Naive thymus-derived CD4-positive, alpha-beta T cell (primary cell): ENCODE measurements at regions of chr16 and their contacts with region 1.

Region 1: GRCh38 chr16:80804056-80804450 is 345 bp downstream of the CDYL2 start:
- DNase-seq: peak; percentile 26 to 69 (median 52)
- ATAC-seq: peak; percentile 69
- H3K4me3 ChIP-seq: no peak overlapping the region
- H3K4me3 Mint-ChIP-seq: peak overlapping the region; percentile 85 to 96 (median 94)
- H3K27ac ChIP-seq: no peak overlapping the region
- H3K27ac Mint-ChIP-seq: peak overlapping the region in 7 of 9 donors; percentile 46 to 98 (median 78)
- H3K4me1 ChIP-seq: peaks cover 0 to 10% of the 10 kb centered on the region in 2 donors
- H3K4me1 Mint-ChIP-seq: peaks cover 12 to 59% (median 18%) of the 10 kb centered on the region in 7 donors
- H3K27me3 ChIP-seq: no peaks in the 10 kb centered on the region
- H3K27me3 Mint-ChIP-seq: peaks cover 0 to 9% (median 0%) of the 10 kb centered on the region in 5 donors

Region 2: GRCh38 chr16:80540516-80541272 is 263.4 kb before region 1 on chr16 and contains the start of gene DYNLRB2:
- CTCF ChIA-PET with region 1: no interaction called
- POLR2A ChIA-PET with region 1: interaction called, 4 read pairs
- intact Hi-C with region 1: loop called (anchors 1 to 2 kb)
- DNase-seq: peak; percentile 82 to 94 (median 93)
- ATAC-seq: peak; percentile 94
- H3K4me3 ChIP-seq: peak within 1 kb of the TSS; percentile 94
- H3K4me3 Mint-ChIP-seq: peak within 1 kb of the TSS; percentile 93 to 98 (median 96)
- H3K27ac ChIP-seq: peak within 1 kb of the TSS; percentile 77
- H3K27ac Mint-ChIP-seq: peak within 1 kb of the TSS; percentile 96 to 99 (median 97)
- H3K4me1 ChIP-seq: peaks cover 6 to 13% of the 10 kb centered on the region in 2 donors
- H3K4me1 Mint-ChIP-seq: peaks cover 16 to 33% (median 19%) of the 10 kb centered on the region in 7 donors
- H3K27me3 ChIP-seq: no peaks in the 10 kb centered on the region
- H3K27me3 Mint-ChIP-seq: peaks cover 0 to 9% (median 3%) of the 10 kb centered on the region in 5 donors
- total RNA-seq, gene DYNLRB2: 0.92 to 1.2 TPM in 2 of 5 experiments, not detected in the others

Region 3: DNA sequence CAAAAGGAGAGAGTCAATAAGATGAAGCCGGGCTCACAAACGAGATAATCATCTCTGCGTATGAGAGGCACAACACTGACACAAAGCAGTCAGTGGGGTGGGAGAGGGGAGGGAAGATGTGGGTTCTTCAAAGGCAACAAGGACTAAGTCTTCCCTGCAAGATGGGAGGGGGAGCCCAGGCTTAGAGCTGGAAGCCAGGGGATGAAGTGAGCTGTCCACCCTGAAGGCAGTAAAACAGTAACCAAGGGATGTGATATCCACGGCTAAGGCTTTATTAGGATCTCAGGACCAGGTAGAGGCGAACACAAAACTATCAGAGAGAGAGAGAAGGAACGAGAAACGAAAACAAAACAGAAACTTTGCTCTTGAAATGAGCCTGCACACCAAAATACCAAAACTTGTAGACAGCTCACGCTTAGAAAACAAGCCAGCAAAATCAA is 147.3 kb before region 1 on chr16:
- CTCF ChIA-PET with region 1: no interaction called
- POLR2A ChIA-PET with region 1: no interaction called
- intact Hi-C with region 1: loop called (anchors 2 to 5 kb)
- DNase-seq: peak in 8 of 9 donors; percentile 25 to 60 (median 48)
- ATAC-seq: peak; percentile 85
- H3K4me3 ChIP-seq: peak overlapping the region; percentile 56
- H3K4me3 Mint-ChIP-seq: peak overlapping the region; percentile 71 to 92 (median 87)
- H3K27ac ChIP-seq: peak overlapping the region; percentile 68
- H3K27ac Mint-ChIP-seq: peak overlapping the region; percentile 80 to 97 (median 91)
- H3K4me1 ChIP-seq: peaks cover 6 to 14% of the 10 kb centered on the region in 2 donors
- H3K4me1 Mint-ChIP-seq: peaks cover 18 to 47% (median 28%) of the 10 kb centered on the region in 7 donors
- H3K27me3 ChIP-seq: no peaks in the 10 kb centered on the region
- H3K27me3 Mint-ChIP-seq: no peaks in the 10 kb centered on the region

Region 4: GRCh38 chr16:80759419-80760162 is 44.5 kb before region 1 on chr16:
- CTCF ChIA-PET with region 1: no interaction called
- POLR2A ChIA-PET with region 1: no interaction called
- intact Hi-C with region 1: loop called in 1 of 2 experiments (anchors 5 kb)
- DNase-seq: no peak
- ATAC-seq: no peak
- H3K4me3 ChIP-seq: no peak overlapping the region
- H3K4me3 Mint-ChIP-seq: peak overlapping the region in 1 of 10 donors; percentile 10
- H3K27ac ChIP-seq: no peak overlapping the region
- H3K27ac Mint-ChIP-seq: peak overlapping the region in 1 of 9 donors; percentile 44
- H3K4me1 ChIP-seq: no peaks in the 10 kb centered on the region
- H3K4me1 Mint-ChIP-seq: peaks cover 0 to 19% (median 0%) of the 10 kb centered on the region in 7 donors
- H3K27me3 ChIP-seq: no peaks in the 10 kb centered on the region
- H3K27me3 Mint-ChIP-seq: no peaks in the 10 kb centered on the region

Region 5: DNA sequence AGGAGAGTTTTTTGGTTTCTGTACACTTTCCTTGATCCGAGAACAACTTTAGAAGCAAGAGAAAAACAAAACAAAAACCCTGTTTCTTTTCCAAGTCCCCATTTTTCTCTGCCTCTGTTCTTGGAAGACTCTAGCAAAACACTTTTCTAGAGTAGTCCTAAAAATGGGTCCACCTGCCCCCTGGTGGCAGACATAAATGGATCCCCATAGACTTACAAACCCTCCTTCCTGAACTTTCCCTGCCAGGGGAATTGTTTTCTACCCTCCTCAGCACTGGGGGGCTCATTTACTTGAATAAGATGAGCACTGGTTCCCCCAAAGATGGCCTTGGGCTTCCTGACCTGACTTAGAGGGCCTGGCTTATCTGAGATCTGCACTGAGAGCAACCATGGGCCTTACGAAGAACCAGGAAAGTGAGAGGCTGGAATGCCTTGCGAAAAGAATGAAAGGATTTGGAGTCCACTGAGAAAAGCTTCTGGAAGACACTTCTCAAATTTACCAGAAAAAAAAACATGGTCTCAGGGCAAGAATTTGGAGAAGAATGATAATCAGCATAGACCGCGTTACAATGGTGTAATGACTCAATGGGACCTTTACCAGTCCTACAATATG is 48.3 kb after region 1 on chr16:
- CTCF ChIA-PET with region 1: no interaction called
- POLR2A ChIA-PET with region 1: no interaction called
- intact Hi-C with region 1: no loop called
- DNase-seq: peak in 2 of 9 donors; percentile 4 to 26
- ATAC-seq: no peak
- H3K4me3 ChIP-seq: no peak overlapping the region
- H3K4me3 Mint-ChIP-seq: no peak overlapping the region
- H3K27ac ChIP-seq: no peak overlapping the region
- H3K27ac Mint-ChIP-seq: no peak overlapping the region
- H3K4me1 ChIP-seq: no peaks in the 10 kb centered on the region
- H3K4me1 Mint-ChIP-seq: no peaks in the 10 kb centered on the region
- H3K27me3 ChIP-seq: no peaks in the 10 kb centered on the region
- H3K27me3 Mint-ChIP-seq: peaks cover 0 to 27% (median 9%) of the 10 kb centered on the region in 5 donors